ENCODE measurements at regions of chr16 and their contacts with region 1.

Region 1: DNA sequence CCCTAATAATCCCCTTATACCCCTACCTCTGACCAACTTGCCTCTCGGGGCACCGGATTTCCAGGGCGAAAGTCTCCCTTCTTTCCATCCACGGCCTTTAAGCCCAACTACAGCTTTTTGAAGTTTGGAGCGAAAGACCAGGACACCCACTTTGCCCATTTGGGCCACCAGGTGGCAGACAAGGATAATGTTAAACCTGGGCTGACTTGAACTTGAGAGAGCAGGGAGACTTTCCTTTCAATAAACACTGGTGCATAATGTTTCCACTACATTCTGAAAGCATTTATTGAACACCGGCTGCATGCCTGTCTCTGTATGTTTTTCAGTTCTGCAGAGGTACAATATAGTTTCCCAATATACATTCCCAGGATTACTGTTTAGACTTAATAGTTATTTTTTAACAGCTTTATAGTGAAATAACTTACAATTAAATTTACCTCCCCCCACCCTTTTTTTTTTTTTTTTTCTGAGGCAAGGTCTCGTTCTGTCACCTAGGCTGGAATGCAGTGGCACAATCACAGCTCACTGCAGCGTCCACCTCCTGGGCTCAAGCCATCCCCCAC is 6.9 kb upstream of the CES3 start:
- DNase-seq: peak; percentile 38 to 88
- H3K4me3 ChIP-seq: no peak overlapping the region
- H3K27ac ChIP-seq: no peak overlapping the region
- H3K4me1 ChIP-seq: no peaks in the 10 kb centered on the region
- H3K27me3 ChIP-seq: peaks cover 0 to 14% (median 13%) of the 10 kb centered on the region in 4 experiments; a peak in 6 of 7 replicates
- CTCF ChIP-seq: peak; percentile 71 to 84 (median 83)
- EP300 ChIP-seq: no peak
- POLR2A ChIP-seq: no peak
- RAD21 ChIP-seq: peak; percentile 88 to 90

Region 2: GRCh38 chr16:66886346-66886745 is 67.8 kb before region 1 on chr16:
- CTCF ChIA-PET with region 1: no interaction called
- POLR2A ChIA-PET with region 1: no interaction called
- DNase-seq: no peak
- H3K4me3 ChIP-seq: no peak overlapping the region
- H3K27ac ChIP-seq: no peak overlapping the region
- H3K4me1 ChIP-seq: peaks cover 0 to 5% (median under 1%) of the 10 kb centered on the region in 4 experiments; a peak in 1 of 7 replicates
- H3K27me3 ChIP-seq: no peaks in the 10 kb centered on the region
- CTCF ChIP-seq: no peak
- EP300 ChIP-seq: no peak
- POLR2A ChIP-seq: no peak
- RAD21 ChIP-seq: no peak

Region 3: DNA sequence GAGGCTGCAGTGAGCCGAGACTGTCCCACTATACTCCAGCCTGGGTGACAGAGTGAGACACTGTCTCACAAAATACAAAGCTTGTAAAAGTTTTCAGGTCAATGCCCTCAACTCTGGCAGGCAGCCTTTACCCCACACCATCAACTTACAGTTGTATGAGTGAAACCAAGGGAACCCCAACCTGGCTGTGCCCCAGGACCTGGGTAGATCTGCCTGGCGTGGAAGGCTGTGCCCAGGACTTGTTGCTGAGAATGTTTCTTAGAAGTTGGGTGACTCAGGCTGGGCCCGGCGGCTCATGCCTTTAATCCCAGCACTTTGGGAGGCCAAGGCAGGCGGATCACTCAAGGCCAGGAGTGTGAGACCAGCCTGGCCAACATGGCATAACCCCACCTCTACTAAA is 14.7 kb after region 1 on chr16:
- CTCF ChIA-PET with region 1: interaction called, 130 read pairs
- POLR2A ChIA-PET with region 1: no interaction called
- DNase-seq: no peak
- H3K4me3 ChIP-seq: no peak overlapping the region
- H3K27ac ChIP-seq: no peak overlapping the region
- H3K4me1 ChIP-seq: no peaks in the 10 kb centered on the region
- H3K27me3 ChIP-seq: no peaks in the 10 kb centered on the region
- CTCF ChIP-seq: no peak
- EP300 ChIP-seq: no peak
- POLR2A ChIP-seq: no peak
- RAD21 ChIP-seq: no peak

Region 4: GRCh38 chr16:67150833-67151396 is 196.7 kb after region 1 on chr16 and contains the start of gene B3GNT9:
- CTCF ChIA-PET with region 1: interaction called, 32 read pairs
- POLR2A ChIA-PET with region 1: no interaction called
- DNase-seq: peak in 1 of 2 experiments; percentile 88
- H3K4me3 ChIP-seq: peak within 1 kb of the TSS; percentile 62 to 75 (median 72)
- H3K27ac ChIP-seq: no peak within 1 kb of the TSS
- H3K4me1 ChIP-seq: peaks cover 0 to 13% (median 9%) of the 10 kb centered on the region in 4 experiments; a peak in 5 of 7 replicates
- H3K27me3 ChIP-seq: peaks cover 34 to 56% (median 47%) of the 10 kb centered on the region in 4 experiments
- CTCF ChIP-seq: no peak
- EP300 ChIP-seq: no peak
- POLR2A ChIP-seq: no peak
- RAD21 ChIP-seq: no peak
- total RNA-seq, gene B3GNT9: 3.5 and 4.7 TPM in 2 replicates